ENCODE measurements at regions of chr10 and their contacts with region 1.

Region 1: GRCh38 chr10:120221873-120222485 is 235.0 kb upstream of the PLPP4 start:
- DNase-seq: peak in 3 of 6 donors; percentile 19 to 47 (median 27)
- ATAC-seq: peak; percentile 35 to 84 (median 56)
- H3K4me3 ChIP-seq: no peak overlapping the region
- H3K27ac ChIP-seq: no peak overlapping the region
- H3K4me1 ChIP-seq: no peaks in the 10 kb centered on the region
- H3K27me3 ChIP-seq: no peaks in the 10 kb centered on the region
- CTCF ChIP-seq: peak; percentile 25 to 49 (median 32)

Region 2: DNA sequence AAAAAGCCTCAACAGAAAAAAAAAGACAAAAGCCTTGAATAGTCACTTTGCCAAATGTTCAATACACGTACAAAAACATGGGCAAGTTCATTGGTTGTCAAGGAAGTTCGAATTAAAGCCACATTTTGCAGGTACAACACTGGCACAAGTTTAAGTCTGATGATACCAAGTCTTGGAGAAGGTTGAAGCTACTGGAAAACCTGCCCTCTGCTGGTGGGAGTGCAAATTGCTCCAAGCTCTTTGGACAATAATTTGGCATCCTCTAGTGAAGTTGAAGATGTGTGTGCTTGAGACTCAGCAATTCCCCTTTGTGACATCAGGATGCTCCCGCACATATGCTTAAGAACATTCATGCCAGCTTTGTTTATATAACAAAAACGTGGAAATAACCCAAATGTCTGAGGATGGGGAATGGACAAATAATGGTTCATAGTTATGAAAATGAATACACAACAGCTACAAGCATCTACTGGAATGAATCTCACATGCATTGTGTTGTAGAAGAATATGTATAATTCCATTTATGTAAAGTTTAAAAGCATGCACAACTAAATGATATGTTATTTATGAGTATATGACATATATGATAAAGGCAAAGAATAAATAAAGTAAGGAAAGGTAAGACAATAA is 115.0 kb after region 1 on chr10:
- intact Hi-C with region 1: loop called in 2 of 3 experiments (anchors 10 kb)
- DNase-seq: peak in 5 of 6 donors; percentile 31 to 81 (median 52)
- ATAC-seq: peak; percentile 38 to 82 (median 68)
- H3K4me3 ChIP-seq: no peak overlapping the region
- H3K27ac ChIP-seq: no peak overlapping the region
- H3K4me1 ChIP-seq: no peaks in the 10 kb centered on the region
- H3K27me3 ChIP-seq: peaks cover 0 to 4% (median 0%) of the 10 kb centered on the region in 4 donors
- CTCF ChIP-seq: peak; percentile 50 to 75 (median 68)

Measured in pancreas (tissue), 10 donors.